Activated CD4-positive, alpha-beta T cell treated with anti-CD3 and anti-CD28 coated beads for 36 hours (primary cell): ENCODE measurements at regions of chr5 and their contacts with region 1.

Region 1: DNA sequence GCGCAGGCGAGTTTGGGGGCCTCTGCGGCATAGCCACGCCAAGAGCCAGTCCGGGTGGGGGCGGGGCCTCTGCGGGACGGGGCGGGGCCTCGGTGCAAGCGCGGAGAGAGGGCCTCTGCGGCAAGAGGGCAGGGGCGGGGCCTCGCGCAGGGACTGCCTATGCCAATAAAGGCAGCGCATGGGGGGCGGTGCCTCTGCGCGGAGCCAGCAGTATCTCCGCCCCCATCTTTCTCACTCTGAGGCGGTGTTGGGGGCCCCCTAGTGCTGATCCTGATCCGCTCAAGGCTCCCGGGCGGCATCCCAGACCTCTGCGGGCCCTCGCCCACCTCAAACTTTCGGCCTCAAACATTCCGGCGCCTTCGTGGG is 9.2 kb upstream of the GPRIN1 start:
- DNase-seq: peak; percentile 95
- ATAC-seq: peak; percentile 100
- H3K4me3 Mint-ChIP-seq: no peak overlapping the region
- H3K27ac Mint-ChIP-seq: no peak overlapping the region
- H3K4me1 Mint-ChIP-seq: peaks cover 8% of the 10 kb centered on the region
- H3K27me3 Mint-ChIP-seq: peaks cover 46% of the 10 kb centered on the region

Region 2: DNA sequence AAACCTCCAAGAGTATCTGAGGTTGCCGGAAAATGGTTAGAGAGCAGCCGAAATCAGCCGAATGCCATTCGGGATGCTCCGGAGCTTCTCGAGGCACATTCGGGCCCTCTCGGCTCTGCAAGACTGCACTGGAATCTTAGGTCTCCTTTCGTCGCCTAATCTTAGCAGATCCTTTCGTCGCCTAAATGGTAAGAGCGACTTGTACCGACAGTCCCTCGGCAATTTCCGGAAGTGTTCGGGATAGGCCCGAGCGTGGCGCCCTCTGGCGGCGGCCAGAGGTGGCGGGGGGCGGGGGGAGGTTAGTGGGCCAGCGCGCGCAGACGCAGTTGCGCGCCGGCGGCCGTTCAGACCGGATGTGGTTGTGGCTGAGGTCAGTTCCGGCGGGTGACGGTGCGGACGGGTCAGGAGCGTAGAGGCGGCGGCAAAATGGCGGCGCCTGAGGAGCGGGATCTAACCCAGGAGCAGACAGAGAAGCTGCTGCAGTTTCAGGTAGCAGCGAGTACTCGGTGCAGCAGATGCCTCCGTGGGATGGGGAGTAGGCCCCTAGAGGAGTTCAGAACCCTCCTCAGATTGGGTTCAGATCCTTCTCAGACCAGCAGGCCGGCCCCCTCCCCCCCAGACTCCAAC is 171.1 kb before region 1 on chr5 and contains the start of gene FAF2:
- CTCF ChIA-PET with region 1: no interaction called
- POLR2A ChIA-PET with region 1: no interaction called
- intact Hi-C with region 1: no loop called
- DNase-seq: peak; percentile 98
- ATAC-seq: peak; percentile 98
- H3K4me3 Mint-ChIP-seq: peak within 1 kb of the TSS; percentile 90
- H3K27ac Mint-ChIP-seq: peak within 1 kb of the TSS; percentile 97
- H3K4me1 Mint-ChIP-seq: peaks cover 31% of the 10 kb centered on the region
- H3K27me3 Mint-ChIP-seq: no peaks in the 10 kb centered on the region
- total RNA-seq, gene FAF2: 37.6 to 44.8 TPM

Region 3: DNA sequence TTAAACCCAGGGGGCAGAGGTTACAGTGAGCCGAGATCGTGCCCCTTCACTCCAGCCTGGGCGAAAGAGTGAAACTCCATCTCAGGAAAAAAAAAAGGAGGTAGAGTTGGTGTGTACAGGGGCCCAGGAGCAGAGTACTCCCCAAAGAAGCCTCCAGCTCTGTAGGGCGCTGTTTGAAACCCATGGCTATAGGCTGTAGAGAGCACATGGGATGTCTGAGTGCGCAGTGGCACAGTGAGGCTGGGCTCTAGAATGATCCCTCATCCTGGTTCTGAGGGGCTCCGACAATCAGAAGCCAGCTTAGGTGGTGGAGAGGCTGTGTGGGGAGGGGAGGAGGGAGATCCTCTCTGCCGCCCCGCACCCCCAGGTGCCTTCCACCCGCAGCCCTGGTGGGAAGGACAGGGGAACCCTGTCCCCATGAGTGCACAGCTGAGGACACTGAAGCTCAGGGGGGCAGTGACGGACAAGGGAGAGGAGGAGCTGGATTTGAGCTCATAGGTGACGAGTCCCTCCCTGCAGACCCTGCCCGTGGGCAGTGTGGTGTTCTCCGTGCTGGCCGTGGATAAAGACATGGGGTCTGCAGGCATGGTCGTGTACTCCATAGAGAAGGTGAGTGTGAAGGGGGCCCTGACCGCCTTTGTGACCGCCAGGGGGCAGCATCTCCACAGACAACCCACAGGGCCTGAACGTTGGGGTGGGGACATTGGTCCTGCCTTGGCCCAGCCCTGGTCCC is 45.5 kb before region 1 on chr5:
- CTCF ChIA-PET with region 1: interaction called, 5 read pairs
- POLR2A ChIA-PET with region 1: no interaction called
- intact Hi-C with region 1: loop called (anchors 1 kb)
- DNase-seq: peak; percentile 88
- ATAC-seq: peak; percentile 90
- H3K4me3 Mint-ChIP-seq: no peak overlapping the region
- H3K27ac Mint-ChIP-seq: no peak overlapping the region
- H3K4me1 Mint-ChIP-seq: no peaks in the 10 kb centered on the region
- H3K27me3 Mint-ChIP-seq: peaks cover 4% of the 10 kb centered on the region

Region 4: DNA sequence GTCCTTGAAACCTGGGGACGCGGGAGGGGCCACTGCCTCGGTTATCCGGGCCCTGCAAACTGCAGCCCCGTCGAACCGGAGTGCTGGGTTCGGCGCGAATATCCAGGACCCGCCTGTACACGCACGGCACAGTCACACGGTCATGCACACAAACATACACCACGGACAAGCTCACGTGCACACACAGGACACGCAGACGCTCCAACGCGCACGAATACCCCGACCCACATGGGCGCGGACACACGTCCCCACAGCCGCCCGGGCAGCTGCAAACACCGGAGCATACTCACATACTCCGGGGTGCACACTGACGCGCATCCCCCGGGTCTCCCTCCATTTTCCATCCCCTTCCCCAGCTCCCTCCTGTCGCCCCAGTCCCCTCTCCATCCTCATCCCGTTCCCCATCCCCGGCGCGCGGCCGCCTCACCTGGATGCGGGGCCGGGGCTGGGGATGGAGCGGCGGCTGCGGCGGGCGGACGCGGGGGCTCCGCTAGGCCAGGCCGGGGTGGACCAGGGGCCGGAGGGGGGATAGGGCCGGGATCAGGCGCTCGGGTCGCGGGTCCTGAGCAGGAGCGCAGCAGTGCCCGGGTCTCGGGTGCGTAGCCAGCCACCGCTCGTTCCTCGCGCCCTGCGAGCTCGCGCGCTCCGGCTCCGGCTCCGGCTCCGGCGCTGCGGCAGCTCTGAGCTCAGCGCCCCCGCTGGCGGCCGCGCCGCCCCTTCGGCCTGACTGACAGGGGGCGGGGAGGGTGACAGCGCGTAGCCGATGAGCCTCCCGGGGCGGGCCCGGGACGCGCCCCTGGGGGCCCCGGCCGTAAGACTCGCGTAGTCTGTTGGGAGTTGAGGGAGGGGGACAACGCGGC is 10.9 kb after region 1 on chr5 and contains the starts of genes EIF4E1B and SNCB:
- CTCF ChIA-PET with region 1: interaction called, 3 read pairs
- POLR2A ChIA-PET with region 1: no interaction called
- intact Hi-C with region 1: loop called in 1 of 2 experiments (anchors 1 kb)
- DNase-seq: peak; percentile 81
- ATAC-seq: peak; percentile 96
- H3K4me3 Mint-ChIP-seq: peak within 1 kb of the TSS; percentile 13
- H3K27ac Mint-ChIP-seq: no peak within 1 kb of the TSS
- H3K4me1 Mint-ChIP-seq: peaks cover 9% of the 10 kb centered on the region
- H3K27me3 Mint-ChIP-seq: peaks cover 55% of the 10 kb centered on the region
- total RNA-seq, gene EIF4E1B: not detected
- total RNA-seq, gene SNCB: 0.46 to 0.55 TPM

Region 5: DNA sequence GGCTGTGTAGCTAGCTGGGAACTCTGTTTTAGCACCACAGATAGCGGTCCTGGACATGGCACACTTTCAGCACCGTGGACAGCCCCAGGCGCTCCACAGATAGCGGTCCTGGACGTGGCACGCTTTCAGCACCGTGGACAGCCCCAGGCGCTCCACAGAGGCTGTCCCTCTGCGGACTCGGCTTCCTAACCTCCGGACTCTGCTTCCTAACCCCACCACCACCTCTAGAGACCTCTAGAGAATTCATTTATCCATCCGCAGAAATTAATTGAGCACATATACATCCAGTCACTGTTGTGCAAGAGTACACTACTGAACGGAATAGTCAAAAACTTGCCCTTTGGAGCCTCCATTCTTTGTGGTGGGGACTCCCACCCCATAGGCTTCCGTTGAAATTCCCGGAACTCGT is 218.5 kb after region 1 on chr5:
- CTCF ChIA-PET with region 1: no interaction called
- POLR2A ChIA-PET with region 1: no interaction called
- intact Hi-C with region 1: no loop called
- DNase-seq: peak; percentile 92
- ATAC-seq: peak; percentile 93
- H3K4me3 Mint-ChIP-seq: no peak overlapping the region
- H3K27ac Mint-ChIP-seq: no peak overlapping the region
- H3K4me1 Mint-ChIP-seq: no peaks in the 10 kb centered on the region
- H3K27me3 Mint-ChIP-seq: peaks cover 28% of the 10 kb centered on the region